Activated naive CD8-positive, alpha-beta T cell treated with anti-CD3 and anti-CD28 coated beads, Interleukin-2, amount 10 ng/mL, durations not matched to agents 7 days and 5 days (primary cell): ENCODE measurements at regions of chr1 and their contacts with region 1.

Region 1: GRCh38 chr1:206583707-206584648 is 28.3 kb downstream of the EIF2D start:
- DNase-seq: peak; percentile 79
- ATAC-seq: peak; percentile 21
- H3K4me3 Mint-ChIP-seq: peak overlapping the region; percentile 67
- H3K27ac Mint-ChIP-seq: peak overlapping the region; percentile 90
- H3K4me1 Mint-ChIP-seq: peaks cover 76% of the 10 kb centered on the region
- H3K27me3 Mint-ChIP-seq: no peaks in the 10 kb centered on the region

Region 2: GRCh38 chr1:206544562-206545257 is 39.3 kb before region 1 on chr1:
- POLR2A ChIA-PET with region 1: interaction called, 24 read pairs
- DNase-seq: peak; percentile 85
- ATAC-seq: peak; percentile 87
- H3K4me3 Mint-ChIP-seq: no peak overlapping the region
- H3K27ac Mint-ChIP-seq: peak overlapping the region; percentile 37
- H3K4me1 Mint-ChIP-seq: peaks cover 17% of the 10 kb centered on the region
- H3K27me3 Mint-ChIP-seq: no peaks in the 10 kb centered on the region

Region 3: DNA sequence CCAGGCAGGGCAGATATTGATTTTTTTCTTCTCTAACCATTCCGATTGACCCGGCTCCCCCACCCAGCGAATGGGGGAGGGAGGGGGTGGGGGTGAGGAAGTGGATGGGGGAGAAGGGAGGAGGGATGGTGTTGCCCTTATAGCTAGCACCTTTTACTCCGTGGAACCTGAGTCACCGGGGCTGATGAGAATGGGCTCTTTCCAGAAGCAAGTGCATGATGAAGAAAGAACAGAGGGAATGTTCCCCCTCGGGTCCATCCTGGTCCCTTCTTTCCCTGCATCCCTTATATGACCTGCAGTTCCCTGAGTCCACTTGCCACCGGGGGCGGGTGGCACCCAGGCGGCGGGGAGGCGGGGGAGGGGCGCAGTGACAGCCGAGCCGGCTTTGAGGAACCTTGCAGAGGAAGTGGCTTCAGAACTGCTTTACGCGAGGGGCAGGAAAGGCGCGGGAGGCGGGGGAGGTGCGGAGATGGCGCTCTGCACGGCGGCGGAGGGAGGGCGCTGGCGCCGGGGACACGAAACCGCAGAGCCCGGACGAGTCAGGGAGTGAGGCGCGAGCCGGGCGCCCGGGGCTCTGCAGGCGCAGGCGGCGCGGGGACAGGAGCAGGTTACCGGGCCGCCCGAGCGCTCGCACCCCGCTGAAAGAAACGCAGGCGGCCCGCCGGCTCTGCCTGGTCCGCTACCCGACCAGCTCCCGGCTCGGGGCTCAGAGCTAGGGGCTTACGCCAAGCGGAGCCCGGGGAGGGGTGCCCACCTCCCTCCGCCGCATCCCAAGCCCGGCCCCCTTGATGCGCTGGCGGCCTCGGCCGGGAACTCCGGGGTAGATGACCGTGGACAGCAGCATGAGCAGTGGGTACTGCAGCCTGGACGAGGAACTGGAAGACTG is 27.0 kb before region 1 on chr1:
- POLR2A ChIA-PET with region 1: interaction called, 584 read pairs
- DNase-seq: peak; percentile 90
- ATAC-seq: peak; percentile 71
- H3K4me3 Mint-ChIP-seq: peak overlapping the region; percentile 93
- H3K27ac Mint-ChIP-seq: peak overlapping the region; percentile 95
- H3K4me1 Mint-ChIP-seq: peaks cover 68% of the 10 kb centered on the region
- H3K27me3 Mint-ChIP-seq: no peaks in the 10 kb centered on the region

Region 4: GRCh38 chr1:206600527-206600926 is 16.5 kb after region 1 on chr1:
- POLR2A ChIA-PET with region 1: no interaction called
- DNase-seq: no peak
- ATAC-seq: no peak
- H3K4me3 Mint-ChIP-seq: no peak overlapping the region
- H3K27ac Mint-ChIP-seq: no peak overlapping the region
- H3K4me1 Mint-ChIP-seq: peaks cover 2% of the 10 kb centered on the region
- H3K27me3 Mint-ChIP-seq: no peaks in the 10 kb centered on the region